ENCODE measurements at regions of chr6 and their contacts with region 1.

Region 1: DNA sequence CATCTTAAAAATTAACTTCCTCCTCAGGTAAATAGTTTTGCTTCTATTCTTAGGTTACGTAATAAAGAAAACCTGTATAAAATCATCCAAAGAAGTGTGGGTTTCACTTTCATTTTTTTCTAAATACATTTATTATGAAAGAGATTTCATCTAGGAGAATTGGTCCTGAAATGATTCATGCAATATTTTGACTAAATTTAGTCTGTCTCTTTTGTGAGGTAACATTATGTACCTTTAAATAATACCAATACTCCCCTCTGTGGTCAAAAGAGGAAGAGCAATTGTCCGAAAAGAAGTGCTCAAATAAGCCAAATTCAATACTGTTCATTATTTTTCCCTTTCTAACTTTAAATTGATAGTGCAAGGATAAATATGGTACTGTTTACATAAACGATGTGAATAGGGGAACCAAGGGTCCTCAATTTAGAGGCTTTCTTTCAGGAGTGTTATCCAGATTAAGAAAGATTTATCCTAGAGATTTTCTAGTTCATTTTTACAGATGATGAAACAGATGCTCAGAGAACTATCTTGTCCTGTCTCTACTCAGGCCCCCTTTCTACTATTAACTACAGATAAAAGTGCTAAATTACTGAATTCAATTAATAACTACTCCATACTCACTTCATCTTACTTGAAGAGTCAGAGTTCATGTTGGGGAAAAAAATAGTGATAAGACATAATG is 26.2 kb downstream of the CYP39A1 start:
- DNase-seq: no peak
- H3K4me3 ChIP-seq: no peak overlapping the region
- H3K27ac ChIP-seq: peak overlapping the region; percentile 46
- H3K4me1 ChIP-seq: no peaks in the 10 kb centered on the region
- H3K27me3 ChIP-seq: no peaks in the 10 kb centered on the region
- CTCF ChIP-seq: peak in 2 of 3 experiments; percentile 61 to 76
- POLR2A ChIP-seq: no peak

Region 2: DNA sequence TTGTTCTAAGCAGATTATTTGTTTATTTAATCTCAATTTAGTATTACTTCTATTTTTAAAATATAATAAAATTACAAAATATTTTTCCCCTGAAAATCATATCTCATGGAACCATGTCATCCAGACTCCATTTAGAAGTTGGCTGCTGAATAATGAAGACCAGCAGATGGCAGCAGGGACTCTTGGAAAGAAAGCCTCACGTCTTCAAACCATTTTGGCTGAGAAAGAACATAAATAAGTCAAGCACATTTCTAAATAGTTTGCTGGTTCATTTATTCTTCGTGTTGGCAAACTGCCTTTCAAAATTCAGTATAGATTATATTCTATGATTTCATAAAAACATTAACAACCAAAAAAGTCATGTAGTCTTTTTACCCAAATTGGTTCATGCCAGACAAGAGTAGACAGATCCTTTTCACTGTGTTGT is 206.8 kb before region 1 on chr6:
- intact Hi-C with region 1: loop called (anchors 5 kb)
- DNase-seq: no peak
- H3K4me3 ChIP-seq: no peak overlapping the region
- H3K27ac ChIP-seq: no peak overlapping the region
- H3K4me1 ChIP-seq: no peaks in the 10 kb centered on the region
- H3K27me3 ChIP-seq: no peaks in the 10 kb centered on the region
- CTCF ChIP-seq: peak; percentile 59 to 78 (median 69)
- POLR2A ChIP-seq: no peak

Region 3: DNA sequence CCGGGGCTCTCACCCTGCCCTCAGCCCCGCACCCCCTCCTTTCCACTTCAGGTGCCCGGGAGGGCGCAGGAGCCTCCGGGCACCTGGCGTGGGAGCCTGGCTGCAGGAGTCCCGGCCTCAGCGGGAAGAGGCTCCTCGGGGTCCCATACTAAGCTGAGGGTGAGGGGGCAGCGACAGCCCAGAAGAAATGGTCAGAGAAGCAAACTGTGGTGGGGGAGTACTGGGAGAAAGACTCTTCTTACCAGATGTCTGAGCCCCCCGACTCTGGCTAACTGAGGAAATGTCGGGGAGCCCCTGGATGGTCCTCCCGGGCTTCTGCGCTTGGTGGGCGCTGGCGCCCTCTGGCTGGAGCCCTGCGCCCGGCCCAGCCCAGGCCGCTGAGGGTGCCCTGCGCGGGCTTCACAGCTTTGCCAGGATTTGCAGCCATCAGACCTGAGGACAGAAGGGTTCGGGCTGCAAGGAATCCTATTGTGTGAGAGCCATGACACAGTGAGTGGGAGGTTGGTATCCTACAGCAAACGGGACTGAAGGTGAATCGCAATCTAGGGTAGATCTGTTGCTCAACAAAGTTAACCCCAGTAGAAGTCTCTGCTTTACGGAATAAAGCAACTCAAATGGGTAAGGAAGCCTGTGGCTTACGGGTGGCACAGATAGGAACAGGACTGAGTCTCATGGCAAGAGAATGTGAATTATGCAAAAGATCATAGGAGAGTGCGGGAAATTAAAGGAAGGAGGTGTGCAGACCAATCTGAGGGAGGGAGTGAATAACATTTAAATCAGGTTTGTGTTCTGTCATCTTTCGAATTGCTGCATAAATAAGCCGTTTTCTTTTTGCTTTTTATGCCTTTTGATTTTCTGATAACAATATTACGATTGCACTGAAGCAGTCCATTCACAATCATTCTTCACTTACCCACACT is 134.5 kb before region 1 on chr6:
- intact Hi-C with region 1: loop called (anchors 10 kb)
- DNase-seq: no peak
- H3K4me3 ChIP-seq: peak overlapping the region; percentile 70 to 90
- H3K27ac ChIP-seq: peak overlapping the region; percentile 84
- H3K4me1 ChIP-seq: peaks cover 11% of the 10 kb centered on the region
- H3K27me3 ChIP-seq: no peaks in the 10 kb centered on the region
- CTCF ChIP-seq: peak; percentile 4 to 77 (median 25)
- POLR2A ChIP-seq: no peak

Region 4: DNA sequence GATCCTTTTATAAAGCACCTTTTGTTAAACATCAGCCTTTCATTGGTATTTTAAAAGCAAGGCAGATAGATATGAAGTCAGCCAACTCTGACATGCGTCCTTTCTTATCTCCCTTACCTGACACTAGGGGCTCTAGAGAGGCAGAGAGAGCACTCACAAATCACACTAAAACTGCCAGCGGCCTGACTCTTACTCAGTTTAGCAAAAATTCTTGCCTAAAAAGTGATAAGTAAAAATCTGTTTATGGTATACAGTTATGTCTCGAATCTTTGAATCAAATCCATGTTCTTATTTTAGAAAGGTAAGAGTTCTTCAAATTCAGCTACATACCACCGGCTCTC is 50.9 kb after region 1 on chr6:
- intact Hi-C with region 1: no loop called
- DNase-seq: no peak
- H3K4me3 ChIP-seq: no peak overlapping the region
- H3K27ac ChIP-seq: no peak overlapping the region
- H3K4me1 ChIP-seq: no peaks in the 10 kb centered on the region
- H3K27me3 ChIP-seq: no peaks in the 10 kb centered on the region
- CTCF ChIP-seq: no peak
- POLR2A ChIP-seq: no peak

Region 5: DNA sequence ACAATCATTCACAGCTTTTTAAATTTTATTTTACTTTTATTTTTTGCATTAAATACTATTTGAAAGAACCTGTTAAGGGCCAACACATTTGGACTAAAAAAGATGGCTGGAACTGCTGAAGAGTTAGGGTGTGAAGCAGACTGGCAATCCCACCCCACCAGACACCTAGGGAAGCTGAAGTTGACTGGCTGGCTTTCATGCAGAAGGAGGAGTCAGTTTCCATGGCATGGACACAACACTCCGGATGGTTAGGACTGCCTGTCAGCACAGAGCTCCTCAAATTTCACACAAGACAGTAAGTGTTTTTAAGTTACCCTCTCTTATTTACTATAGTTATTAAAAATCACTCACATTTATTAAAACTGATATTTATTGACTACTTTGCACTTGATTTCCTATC is 120.3 kb after region 1 on chr6 and contains the start of gene ANKRD66:
- intact Hi-C with region 1: no loop called
- DNase-seq: no peak
- H3K4me3 ChIP-seq: no peak within 1 kb of the TSS
- H3K27ac ChIP-seq: no peak within 1 kb of the TSS
- H3K4me1 ChIP-seq: no peaks in the 10 kb centered on the region
- H3K27me3 ChIP-seq: no peaks in the 10 kb centered on the region
- CTCF ChIP-seq: no peak
- POLR2A ChIP-seq: no peak
- total RNA-seq, gene ANKRD66: not detected

Region 6: GRCh38 chr6:47230579-47230978 is 604.2 kb after region 1 on chr6:
- intact Hi-C with region 1: no loop called
- DNase-seq: no peak
- H3K4me3 ChIP-seq: no peak overlapping the region
- H3K27ac ChIP-seq: no peak overlapping the region
- H3K4me1 ChIP-seq: no peaks in the 10 kb centered on the region
- H3K27me3 ChIP-seq: no peaks in the 10 kb centered on the region
- CTCF ChIP-seq: no peak
- POLR2A ChIP-seq: no peak